ENCODE measurements at regions of chr19 and their contacts with region 1.

Region 1: GRCh38 chr19:38618590-38619360 is at the start of gene EIF3K:
- DNase-seq: peak; percentile 98
- H3K4me3 Mint-ChIP-seq: peak within 1 kb of the TSS; percentile 98
- H3K27ac Mint-ChIP-seq: peak within 1 kb of the TSS; percentile 84
- H3K4me1 Mint-ChIP-seq: peaks cover 32% of the 10 kb centered on the region
- H3K27me3 Mint-ChIP-seq: no peaks in the 10 kb centered on the region
- total RNA-seq, gene EIF3K: 309 and 326 TPM in 2 replicates

Region 2: DNA sequence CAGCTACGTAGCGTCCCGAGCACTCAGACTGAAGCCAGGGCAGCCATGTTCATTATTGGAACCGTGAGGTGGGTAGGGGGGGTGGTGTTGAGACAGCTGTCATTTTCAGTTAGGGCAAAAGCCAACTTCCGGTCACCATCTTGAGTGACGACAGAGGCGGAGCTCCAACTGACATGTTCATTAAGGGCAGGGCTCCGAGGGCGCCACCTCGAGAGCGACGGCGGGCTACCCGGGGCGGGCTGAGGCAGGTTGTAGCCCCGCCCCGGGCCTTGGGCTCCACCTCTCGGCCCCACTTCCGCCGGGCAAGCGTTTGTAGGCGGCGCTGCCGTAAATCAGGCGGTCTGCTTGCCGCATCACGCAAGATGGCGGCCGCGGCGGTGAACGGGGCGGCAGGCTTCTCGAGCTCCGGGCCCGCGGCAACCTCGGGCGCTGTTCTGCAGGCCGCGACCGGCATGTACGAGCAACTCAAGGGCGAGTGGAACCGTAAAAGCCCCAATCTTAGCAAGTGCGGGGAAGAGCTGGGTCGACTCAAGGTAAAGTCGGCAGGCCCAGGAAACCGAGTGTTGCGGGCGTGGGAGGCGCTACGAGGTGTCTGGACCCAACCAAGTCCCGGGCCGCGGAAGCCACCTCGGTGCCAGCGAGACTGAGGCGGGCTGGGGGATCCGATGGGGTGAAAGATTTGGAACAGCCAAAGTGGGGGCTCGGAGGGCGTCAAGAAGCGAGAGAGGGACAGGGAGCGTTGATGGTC is 244.2 kb before region 1 on chr19 and contains the start of gene PSMD8:
- intact Hi-C with region 1: loop called (anchors 1 kb)
- DNase-seq: peak; percentile 98
- H3K4me3 Mint-ChIP-seq: peak within 1 kb of the TSS; percentile 100
- H3K27ac Mint-ChIP-seq: peak within 1 kb of the TSS; percentile 99
- H3K4me1 Mint-ChIP-seq: peaks cover 31% of the 10 kb centered on the region
- H3K27me3 Mint-ChIP-seq: peaks cover 3% of the 10 kb centered on the region
- total RNA-seq, gene PSMD8: 292 and 298 TPM in 2 replicates

Region 3: GRCh38 chr19:38402967-38403861 is 215.6 kb before region 1 on chr19 and contains the start of gene FAM98C:
- intact Hi-C with region 1: loop called (anchors 2 kb)
- DNase-seq: peak; percentile 98
- H3K4me3 Mint-ChIP-seq: peak within 1 kb of the TSS; percentile 89
- H3K27ac Mint-ChIP-seq: peak within 1 kb of the TSS; percentile 94
- H3K4me1 Mint-ChIP-seq: peaks cover 21% of the 10 kb centered on the region
- H3K27me3 Mint-ChIP-seq: no peaks in the 10 kb centered on the region
- total RNA-seq, gene FAM98C: 26.6 and 27.5 TPM in 2 replicates

Region 4: DNA sequence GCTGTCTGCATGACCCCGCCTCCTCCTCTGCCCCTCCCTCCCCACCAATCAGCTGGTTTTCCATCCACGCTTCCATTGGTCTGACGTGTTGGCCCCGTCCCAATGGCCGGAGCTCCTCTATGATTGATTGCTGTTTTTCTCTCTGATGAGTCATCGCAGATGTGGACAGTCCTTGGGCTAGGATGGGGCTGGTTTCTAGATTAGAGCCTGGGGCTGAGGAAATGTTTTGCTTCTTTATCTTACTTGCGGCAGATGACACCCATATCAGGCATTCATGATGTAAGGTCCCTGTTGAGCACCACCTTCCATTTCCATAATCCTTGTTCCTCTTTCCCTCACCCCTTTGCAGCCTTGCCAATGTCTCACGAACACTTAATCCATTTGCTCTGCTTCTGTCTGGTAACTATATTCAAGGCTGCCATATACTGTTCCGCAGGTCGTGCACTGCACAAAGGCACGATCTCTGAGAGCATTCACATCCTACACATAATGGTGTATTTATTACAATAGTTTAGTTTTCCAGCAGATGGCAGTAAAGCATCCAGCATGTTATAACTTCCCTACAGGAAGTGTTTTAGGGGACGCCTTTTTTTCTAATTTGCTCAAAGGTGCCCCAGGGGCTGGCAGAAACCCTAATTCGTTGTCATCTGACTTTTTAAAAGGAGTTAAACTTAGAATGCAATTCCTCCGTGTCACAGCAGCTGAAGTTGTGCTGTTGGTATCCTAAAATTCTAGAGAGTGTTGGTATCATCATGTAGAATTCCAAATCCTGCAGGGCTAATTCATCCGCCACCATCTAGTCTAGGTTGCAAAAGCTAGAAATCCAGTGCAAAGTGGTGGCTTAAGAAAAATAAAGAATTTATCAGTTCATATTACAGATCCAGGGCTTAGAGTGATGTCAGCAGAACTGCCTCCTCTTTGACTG is 74.5 kb before region 1 on chr19:
- intact Hi-C with region 1: loop called (anchors 1 kb)
- DNase-seq: no peak
- H3K4me3 Mint-ChIP-seq: peak overlapping the region; percentile 63
- H3K27ac Mint-ChIP-seq: peak overlapping the region; percentile 46
- H3K4me1 Mint-ChIP-seq: peaks cover 29% of the 10 kb centered on the region
- H3K27me3 Mint-ChIP-seq: no peaks in the 10 kb centered on the region

Region 5: DNA sequence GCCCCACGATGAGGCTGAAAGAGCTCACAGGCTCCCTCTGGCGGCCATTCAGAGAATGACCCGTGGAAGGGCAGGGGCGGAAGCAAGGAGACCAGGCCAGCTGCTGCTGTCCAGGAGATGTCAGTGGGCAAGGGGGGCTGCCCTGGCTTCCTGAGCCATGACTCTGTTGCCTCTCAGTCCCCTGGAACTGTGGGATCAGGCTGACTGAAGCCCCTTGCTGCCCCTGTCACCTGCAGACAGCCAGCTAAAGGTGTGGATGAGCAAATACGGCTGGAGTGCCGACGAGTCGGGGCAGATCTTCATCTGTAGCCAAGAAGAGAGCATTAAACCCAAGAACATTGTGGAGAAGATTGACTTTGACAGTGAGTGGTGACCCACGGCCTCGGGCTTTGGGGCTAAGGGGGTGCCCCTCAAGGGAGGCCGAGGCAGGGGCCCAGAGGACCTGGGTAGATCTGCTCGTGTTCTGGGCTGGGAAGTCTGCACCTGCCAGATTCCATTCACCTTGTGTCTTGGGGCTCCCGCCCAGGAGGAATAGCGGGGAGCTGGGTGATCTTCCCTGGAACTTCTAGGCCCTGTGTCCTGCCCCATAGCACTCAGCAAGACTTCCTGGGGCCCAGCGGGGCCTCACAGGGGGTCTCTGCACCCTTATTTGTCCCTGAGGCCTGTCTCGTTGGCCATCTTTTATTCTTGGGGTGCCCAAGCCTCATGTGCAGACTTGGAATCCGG is 16.1 kb after region 1 on chr19:
- intact Hi-C with region 1: loop called (anchors 1 kb)
- DNase-seq: peak; percentile 68
- H3K4me3 Mint-ChIP-seq: peak overlapping the region; percentile 43
- H3K27ac Mint-ChIP-seq: peak overlapping the region; percentile 83
- H3K4me1 Mint-ChIP-seq: peaks cover 36% of the 10 kb centered on the region
- H3K27me3 Mint-ChIP-seq: no peaks in the 10 kb centered on the region

Region 6: GRCh38 chr19:38658462-38659306 is 39.9 kb after region 1 on chr19:
- intact Hi-C with region 1: loop called (anchors 2 kb)
- DNase-seq: no peak
- H3K4me3 Mint-ChIP-seq: no peak overlapping the region
- H3K27ac Mint-ChIP-seq: no peak overlapping the region
- H3K4me1 Mint-ChIP-seq: peaks cover 63% of the 10 kb centered on the region
- H3K27me3 Mint-ChIP-seq: no peaks in the 10 kb centered on the region

Region 7: DNA sequence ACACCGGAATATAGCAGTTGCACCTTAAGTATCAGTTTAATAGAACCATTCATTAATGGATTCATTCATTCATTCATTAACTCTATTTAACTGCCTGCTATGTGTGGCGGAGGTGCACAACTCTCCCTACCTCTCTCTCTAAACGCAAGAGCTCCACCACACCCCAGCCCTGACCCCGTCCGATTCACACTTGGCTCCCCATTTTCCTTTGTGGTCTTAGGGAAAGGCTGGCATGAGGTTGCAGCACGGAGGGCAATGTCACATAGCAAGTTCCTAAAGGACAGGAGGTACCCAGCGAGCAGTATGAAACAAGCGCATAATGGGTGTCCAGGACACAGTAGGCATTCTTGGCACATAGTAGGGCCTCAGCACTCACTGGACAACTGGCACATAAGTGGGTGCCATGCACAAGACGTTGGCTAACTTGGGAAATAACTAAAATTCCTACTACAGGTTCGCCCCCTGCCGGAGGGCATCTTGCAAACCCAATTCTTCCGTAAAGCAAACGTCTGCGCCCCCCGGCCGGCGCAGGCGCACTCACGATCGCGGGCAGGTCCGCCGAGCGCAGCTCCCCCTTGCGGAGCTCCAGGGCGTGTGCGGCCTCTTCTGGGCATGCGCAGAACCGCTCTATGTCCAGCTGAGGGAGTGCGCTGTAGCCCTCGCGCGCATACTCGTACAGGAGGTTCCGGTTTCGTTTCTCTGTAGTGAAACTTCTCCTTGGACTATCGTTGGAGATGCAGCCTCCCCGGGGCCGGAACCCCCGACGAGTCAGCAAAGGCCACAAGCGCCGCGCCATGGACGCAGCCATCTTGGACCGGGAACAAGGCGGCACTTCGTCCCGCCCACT is 311.4 kb after region 1 on chr19 and contains the start of gene SARS2:
- intact Hi-C with region 1: loop called (anchors 1 kb)
- DNase-seq: peak; percentile 91
- H3K4me3 Mint-ChIP-seq: peak within 1 kb of the TSS; percentile 99
- H3K27ac Mint-ChIP-seq: peak within 1 kb of the TSS; percentile 97
- H3K4me1 Mint-ChIP-seq: peaks cover 28% of the 10 kb centered on the region
- H3K27me3 Mint-ChIP-seq: no peaks in the 10 kb centered on the region
- total RNA-seq, gene SARS2: 36.5 and 38.4 TPM in 2 replicates